Activated T-helper 1 cell treated with anti-CD3 and anti-CD28 coated beads, Interleukin-12 subunit alpha, Interleukin-12 subunit beta, Interleukin-2, Interleukin-4 antibody, amounts not matched to agents 30 ng/mL and 10 ng/mL and 1 ng/mL, durations not matched to agents 14 hours and 24 hours and 36 hours (primary cell): ENCODE measurements at regions of chr5 and their contacts with region 1.

Region 1: GRCh38 chr5:129094087-129094923 is at the start of gene ISOC1:
- DNase-seq: peak; percentile 91
- H3K4me3 Mint-ChIP-seq: peak within 1 kb of the TSS; percentile 86
- H3K27ac Mint-ChIP-seq: peak within 1 kb of the TSS; percentile 81
- H3K4me1 Mint-ChIP-seq: peaks cover 40% of the 10 kb centered on the region
- H3K27me3 Mint-ChIP-seq: peaks cover 12% of the 10 kb centered on the region
- total RNA-seq, gene ISOC1: 32.4 TPM in 2 replicates

Region 2: GRCh38 chr5:127517480-127518318 is 1576.6 kb before region 1 on chr5 and contains the start of gene PRRC1:
- intact Hi-C with region 1: loop called (anchors 5 kb)
- DNase-seq: peak; percentile 73
- H3K4me3 Mint-ChIP-seq: peak within 1 kb of the TSS; percentile 84
- H3K27ac Mint-ChIP-seq: peak within 1 kb of the TSS; percentile 59
- H3K4me1 Mint-ChIP-seq: peaks cover 26% of the 10 kb centered on the region
- H3K27me3 Mint-ChIP-seq: peaks cover 7% of the 10 kb centered on the region
- total RNA-seq, gene PRRC1: 52.9 and 59.7 TPM in 2 replicates

Region 3: DNA sequence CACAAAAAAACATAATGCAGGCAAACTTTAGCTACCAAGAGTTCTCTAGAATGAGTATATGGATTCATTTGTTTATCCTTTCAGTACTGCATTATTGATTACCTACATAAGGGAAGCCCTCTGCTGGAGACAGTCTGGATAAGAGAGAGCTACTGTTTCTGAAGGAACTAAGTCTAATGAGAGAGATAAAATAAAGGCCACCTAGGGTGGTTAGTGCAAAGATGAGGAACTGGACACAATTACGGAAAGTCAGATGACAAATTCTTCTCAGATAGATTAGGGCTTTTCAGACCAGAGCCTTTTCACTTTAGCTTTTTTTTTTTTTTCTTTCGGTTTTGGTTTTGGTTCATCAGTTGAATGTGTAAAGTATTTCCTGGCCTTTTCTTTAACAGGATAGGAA is 31.5 kb after region 1 on chr5:
- intact Hi-C with region 1: loop called (anchors 1 kb)
- DNase-seq: no peak
- H3K4me3 Mint-ChIP-seq: peak overlapping the region; percentile 61
- H3K27ac Mint-ChIP-seq: peak overlapping the region; percentile 73
- H3K4me1 Mint-ChIP-seq: peaks cover 15% of the 10 kb centered on the region
- H3K27me3 Mint-ChIP-seq: no peaks in the 10 kb centered on the region

Region 4: GRCh38 chr5:129172580-129172979 is 78.3 kb after region 1 on chr5:
- intact Hi-C with region 1: no loop called
- DNase-seq: no peak
- H3K4me3 Mint-ChIP-seq: no peak overlapping the region
- H3K27ac Mint-ChIP-seq: no peak overlapping the region
- H3K4me1 Mint-ChIP-seq: no peaks in the 10 kb centered on the region
- H3K27me3 Mint-ChIP-seq: no peaks in the 10 kb centered on the region

Region 5: DNA sequence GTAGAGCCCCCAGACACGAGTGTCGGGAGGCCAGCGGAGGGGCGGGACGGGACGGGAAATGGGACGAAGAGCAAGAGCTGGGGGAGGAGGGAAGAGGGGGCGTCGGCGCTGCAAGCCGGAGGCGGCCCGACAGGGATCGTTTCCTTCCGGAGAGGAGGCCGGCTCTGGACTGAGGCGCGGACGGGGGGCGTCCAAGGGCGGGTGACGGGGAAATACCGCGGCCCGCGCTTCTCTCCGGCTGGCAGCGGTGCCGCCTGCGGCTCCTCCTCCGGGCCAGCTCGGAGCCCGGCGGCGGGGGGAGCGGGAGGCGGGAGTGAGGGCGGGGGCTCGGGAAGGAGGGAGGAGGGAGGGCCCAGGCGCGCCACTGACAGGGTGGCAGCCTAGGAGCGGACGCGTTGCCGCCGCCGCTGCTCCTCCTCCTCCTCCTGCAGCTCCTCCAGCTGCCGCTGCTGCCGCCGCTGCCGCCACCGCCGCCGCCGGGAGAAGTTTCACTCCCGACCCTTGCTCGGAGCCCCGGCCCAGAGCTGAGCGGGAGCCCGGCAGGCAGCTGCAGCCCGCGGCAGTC is 809.9 kb after region 1 on chr5 and contains the start of gene CHSY3:
- intact Hi-C with region 1: loop called (anchors 10 kb)
- DNase-seq: peak; percentile 16
- H3K4me3 Mint-ChIP-seq: peak within 1 kb of the TSS; percentile 81
- H3K27ac Mint-ChIP-seq: no peak within 1 kb of the TSS
- H3K4me1 Mint-ChIP-seq: peaks cover 14% of the 10 kb centered on the region
- H3K27me3 Mint-ChIP-seq: peaks cover 49% of the 10 kb centered on the region
- total RNA-seq, gene CHSY3: not detected in 2 replicates